RWPE1 (cell line): ENCODE measurements at regions of chr11 and their contacts with region 1.

Region 1: GRCh38 chr11:59171508-59172322 is at the start of gene DTX4:
- DNase-seq: peak; percentile 88
- H3K27ac ChIP-seq: peak within 1 kb of the TSS; percentile 93
- CTCF ChIP-seq: peak; percentile 94

Region 2: GRCh38 chr11:59158206-59159068 is 13.3 kb before region 1 on chr11:
- CTCF ChIA-PET with region 1: interaction called, 15 read pairs
- POLR2A ChIA-PET with region 1: no interaction called
- DNase-seq: peak; percentile 73
- H3K27ac ChIP-seq: no peak overlapping the region
- CTCF ChIP-seq: peak; percentile 78

Region 3: GRCh38 chr11:59186130-59186594 is 14.4 kb after region 1 on chr11:
- CTCF ChIA-PET with region 1: interaction called, 15 read pairs
- POLR2A ChIA-PET with region 1: interaction called, 4 read pairs
- DNase-seq: peak; percentile 34
- H3K27ac ChIP-seq: no peak overlapping the region
- CTCF ChIP-seq: peak; percentile 40

Region 4: DNA sequence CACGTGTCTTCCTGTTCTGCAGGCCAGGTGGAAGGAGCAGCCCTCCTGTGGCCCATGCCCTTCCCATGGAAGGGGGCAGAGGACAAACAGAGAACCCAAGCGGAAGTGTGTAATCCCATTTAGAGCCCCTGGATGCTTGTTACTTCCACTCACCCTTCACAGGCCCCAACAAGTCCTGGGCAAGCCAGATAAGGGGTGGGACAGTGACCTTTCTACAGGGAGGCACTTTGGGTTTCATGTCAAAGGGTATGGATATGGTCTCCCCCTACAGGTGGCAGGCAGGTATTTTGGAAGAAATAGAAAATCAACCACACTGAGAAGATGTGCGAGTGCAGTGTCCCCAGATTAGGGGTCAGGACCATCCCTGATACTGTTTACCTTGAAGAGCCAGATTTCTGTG is 29.6 kb after region 1 on chr11:
- CTCF ChIA-PET with region 1: interaction called, 24 read pairs
- POLR2A ChIA-PET with region 1: no interaction called
- DNase-seq: peak; percentile 32
- H3K27ac ChIP-seq: no peak overlapping the region
- CTCF ChIP-seq: 0 out of 2 replicates have a peak, but pooled peaks have one; percentile 14

Region 5: GRCh38 chr11:59206635-59207034 is 34.9 kb after region 1 on chr11:
- CTCF ChIA-PET with region 1: interaction called, 24 read pairs
- POLR2A ChIA-PET with region 1: no interaction called
- DNase-seq: no peak
- H3K27ac ChIP-seq: no peak overlapping the region
- CTCF ChIP-seq: peak; percentile 23; the same call in 1 of the 2 replicates

Region 6: DNA sequence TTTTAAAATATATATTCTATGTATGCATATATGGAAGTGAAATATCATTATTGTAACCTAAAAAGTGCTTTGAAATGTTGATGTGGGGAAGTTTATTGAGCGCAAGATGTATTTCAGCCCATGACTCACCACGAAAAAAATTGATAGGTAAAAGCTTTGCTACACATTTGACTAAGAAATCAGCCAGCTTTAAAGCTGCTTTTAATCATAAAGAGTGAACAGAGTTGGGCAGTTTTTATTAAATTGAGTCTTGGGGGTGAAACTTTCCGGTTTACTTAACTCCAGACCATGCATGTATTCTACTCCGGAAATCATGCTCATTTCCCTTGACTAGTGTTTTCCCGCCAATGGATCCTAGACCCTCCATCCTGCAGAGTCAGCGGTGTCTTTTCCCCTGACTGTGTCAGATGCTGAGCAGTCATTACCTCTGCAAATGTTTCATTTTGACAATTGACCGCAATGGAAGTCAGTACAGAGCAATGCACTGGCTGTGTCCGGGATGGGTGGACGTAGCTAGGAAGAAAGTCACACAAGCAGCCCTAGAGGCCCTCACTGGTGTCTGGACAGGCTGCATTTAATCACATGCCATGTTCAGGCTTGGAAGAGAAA is 88.3 kb after region 1 on chr11:
- CTCF ChIA-PET with region 1: no interaction called
- POLR2A ChIA-PET with region 1: no interaction called
- DNase-seq: no peak
- H3K27ac ChIP-seq: no peak overlapping the region
- CTCF ChIP-seq: no peak